ENCODE measurements at regions of chr7 and their contacts with region 1.

Region 1: GRCh38 chr7:158655931-158656441 is 48.6 kb downstream of the NCAPG2 start:
- DNase-seq: peak; percentile 88
- H3K4me3 Mint-ChIP-seq: peak overlapping the region; percentile 31
- H3K27ac Mint-ChIP-seq: peak overlapping the region; percentile 85
- H3K4me1 Mint-ChIP-seq: peaks cover 29% of the 10 kb centered on the region
- H3K27me3 Mint-ChIP-seq: no peaks in the 10 kb centered on the region

Region 2: DNA sequence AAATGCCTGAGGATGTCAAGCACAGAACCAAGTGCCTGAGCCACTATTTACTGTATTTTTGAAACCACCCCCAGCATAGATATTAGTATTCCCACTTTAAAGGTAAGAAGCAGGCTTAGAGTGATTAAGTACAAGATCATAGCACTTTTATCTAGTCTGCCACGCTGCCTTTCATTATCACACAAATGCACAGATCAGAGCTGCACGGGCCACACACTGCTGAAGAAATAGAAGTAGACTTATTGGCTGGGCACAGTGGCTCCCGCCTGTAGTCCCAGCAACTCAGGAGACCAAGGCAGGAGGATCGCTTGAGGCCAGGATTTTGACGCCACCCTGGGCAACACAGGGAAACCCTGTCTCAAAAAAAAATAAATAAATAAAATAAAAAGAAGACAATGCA is 10.4 kb after region 1 on chr7:
- CTCF ChIA-PET with region 1: no interaction called
- POLR2A ChIA-PET with region 1: no interaction called
- intact Hi-C with region 1: no loop called
- DNase-seq: no peak
- H3K4me3 Mint-ChIP-seq: no peak overlapping the region
- H3K27ac Mint-ChIP-seq: no peak overlapping the region
- H3K4me1 Mint-ChIP-seq: peaks cover 21% of the 10 kb centered on the region
- H3K27me3 Mint-ChIP-seq: no peaks in the 10 kb centered on the region

Region 3: GRCh38 chr7:158689488-158689887 is 33.5 kb after region 1 on chr7:
- CTCF ChIA-PET with region 1: no interaction called
- POLR2A ChIA-PET with region 1: no interaction called
- intact Hi-C with region 1: no loop called
- DNase-seq: no peak
- H3K4me3 Mint-ChIP-seq: no peak overlapping the region
- H3K27ac Mint-ChIP-seq: no peak overlapping the region
- H3K4me1 Mint-ChIP-seq: peaks cover 4% of the 10 kb centered on the region
- H3K27me3 Mint-ChIP-seq: no peaks in the 10 kb centered on the region

Region 4: GRCh38 chr7:158704704-158705468 is 48.9 kb after region 1 on chr7 and contains the start of gene NCAPG2:
- CTCF ChIA-PET with region 1: no interaction called
- POLR2A ChIA-PET with region 1: interaction called, 13 read pairs
- intact Hi-C with region 1: loop called (anchors 1 kb)
- DNase-seq: peak; percentile 98
- H3K4me3 Mint-ChIP-seq: peak within 1 kb of the TSS; percentile 84
- H3K27ac Mint-ChIP-seq: peak within 1 kb of the TSS; percentile 82
- H3K4me1 Mint-ChIP-seq: peaks cover 40% of the 10 kb centered on the region
- H3K27me3 Mint-ChIP-seq: no peaks in the 10 kb centered on the region
- total RNA-seq, gene NCAPG2: 145 to 149 TPM

Region 5: DNA sequence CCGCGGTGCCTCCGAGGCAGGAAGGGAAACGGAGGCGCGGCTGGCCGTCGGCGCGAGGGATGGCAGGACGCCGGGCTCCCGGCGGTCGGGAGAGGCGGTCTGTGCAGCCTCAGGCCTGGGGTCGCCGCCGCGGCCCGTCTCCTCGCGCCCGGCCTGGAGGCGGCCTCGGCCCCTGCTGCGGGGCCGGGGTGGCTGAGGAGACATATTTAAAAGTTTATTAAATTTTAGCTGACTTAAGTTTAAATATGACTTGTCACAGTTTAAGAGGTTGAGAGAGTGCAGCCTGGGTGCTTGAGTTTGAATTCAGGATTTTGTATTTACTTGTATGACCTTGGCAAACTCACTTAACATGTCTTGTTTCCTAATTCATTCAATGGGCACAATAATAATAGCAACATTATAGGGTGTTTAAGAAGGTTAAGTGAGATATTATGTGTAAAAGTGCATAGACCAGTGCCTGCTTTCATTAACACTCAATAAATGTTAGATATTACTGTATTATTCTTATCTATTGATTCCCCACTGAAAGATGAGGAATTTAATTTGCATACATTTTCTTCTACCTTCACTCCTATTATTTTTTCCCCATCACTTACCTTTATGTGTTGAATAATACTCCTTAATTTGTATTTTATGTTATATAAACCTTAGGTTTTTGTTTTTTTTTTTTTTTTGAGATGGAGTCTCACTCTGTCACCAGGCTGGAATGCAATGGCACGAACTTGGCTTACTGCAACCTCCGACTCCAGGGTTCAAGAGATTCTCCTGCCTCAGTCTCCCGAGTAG is 201.1 kb after region 1 on chr7:
- CTCF ChIA-PET with region 1: no interaction called
- POLR2A ChIA-PET with region 1: no interaction called
- intact Hi-C with region 1: loop called (anchors 5 kb)
- DNase-seq: no peak
- H3K4me3 Mint-ChIP-seq: peak overlapping the region; percentile 98
- H3K27ac Mint-ChIP-seq: peak overlapping the region; percentile 45
- H3K4me1 Mint-ChIP-seq: peaks cover 19% of the 10 kb centered on the region
- H3K27me3 Mint-ChIP-seq: no peaks in the 10 kb centered on the region

Region 6: DNA sequence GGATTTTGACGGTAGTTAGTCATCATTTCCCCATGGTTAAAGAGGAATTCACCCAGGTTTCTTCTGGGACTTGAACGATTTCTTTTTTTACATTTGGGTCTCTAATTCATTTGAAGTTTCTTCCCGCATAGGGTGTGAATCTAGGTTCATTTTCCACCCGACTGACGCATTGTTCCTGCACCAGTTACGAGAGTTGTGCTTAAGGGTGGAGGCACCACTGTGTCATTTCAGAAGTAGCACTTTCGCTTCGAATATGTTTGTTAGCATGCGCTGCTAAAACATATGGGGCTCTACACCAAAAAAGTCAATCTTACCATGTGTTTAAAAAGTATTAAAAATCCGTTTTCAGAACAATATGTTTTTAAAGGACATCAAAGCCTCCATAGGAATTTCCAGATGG is 348.4 kb after region 1 on chr7:
- CTCF ChIA-PET with region 1: no interaction called
- POLR2A ChIA-PET with region 1: no interaction called
- intact Hi-C with region 1: loop called (anchors 1 kb)
- DNase-seq: peak; percentile 75
- H3K4me3 Mint-ChIP-seq: no peak overlapping the region
- H3K27ac Mint-ChIP-seq: peak overlapping the region; percentile 68
- H3K4me1 Mint-ChIP-seq: peaks cover 29% of the 10 kb centered on the region
- H3K27me3 Mint-ChIP-seq: peaks cover 12% of the 10 kb centered on the region

Measured in activated CD4-positive, alpha-beta memory T cell treated with anti-CD3 and anti-CD28 coated beads for 36 hours (primary cell).